Naive thymus-derived CD4-positive, alpha-beta T cell (primary cell): ENCODE measurements at regions of chr4 and their contacts with region 1.

Region 1: DNA sequence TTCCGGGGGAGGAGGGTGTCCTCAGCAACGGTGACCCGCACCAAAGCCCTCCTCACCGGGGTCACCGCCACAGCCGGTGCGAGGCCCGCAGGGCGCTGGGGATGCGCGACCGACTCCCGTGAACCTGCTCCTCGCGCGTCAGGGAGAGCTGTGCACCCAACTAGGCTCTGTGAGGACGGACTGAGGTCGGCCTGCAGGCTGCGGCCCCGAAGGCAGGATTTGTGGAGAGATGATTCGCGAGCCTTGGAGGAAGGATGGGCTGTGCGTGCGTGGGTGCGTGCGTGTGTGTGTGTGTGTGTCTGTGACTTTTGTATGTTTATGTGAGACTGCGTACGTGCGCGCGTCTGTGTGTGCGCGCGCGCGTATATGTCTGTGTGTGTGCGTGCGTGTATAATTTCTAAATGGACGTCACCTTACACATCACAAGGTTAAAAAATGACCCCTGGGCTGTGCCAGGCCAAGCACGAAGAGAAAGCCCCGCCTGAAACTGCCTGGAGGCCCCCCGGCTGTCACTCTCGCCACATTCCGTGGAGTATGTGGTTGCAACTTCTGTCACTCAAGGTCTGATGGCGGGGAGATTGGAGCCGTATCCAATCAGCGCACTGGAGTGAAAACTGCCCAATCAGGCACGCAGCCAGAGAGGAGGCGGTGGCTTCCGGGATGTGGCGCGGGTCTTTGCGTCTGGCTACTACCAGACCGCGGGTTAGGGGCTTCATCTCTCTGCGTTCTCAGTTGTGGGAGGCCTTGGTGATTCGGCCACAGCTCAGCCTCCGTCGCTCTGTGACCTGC is at the start of gene ZNF141:
- DNase-seq: peak; percentile 74 to 95 (median 93)
- ATAC-seq: peak; percentile 93
- H3K4me3 ChIP-seq: peak within 1 kb of the TSS; percentile 91
- H3K4me3 Mint-ChIP-seq: peak within 1 kb of the TSS; percentile 93 to 100 (median 99)
- H3K27ac ChIP-seq: peak within 1 kb of the TSS; percentile 85
- H3K27ac Mint-ChIP-seq: peak within 1 kb of the TSS; percentile 95 to 100 (median 99)
- H3K4me1 ChIP-seq: peaks cover 9 to 10% of the 10 kb centered on the region in 2 donors
- H3K4me1 Mint-ChIP-seq: peaks cover 11 to 46% (median 41%) of the 10 kb centered on the region in 7 donors
- H3K27me3 ChIP-seq: no peaks in the 10 kb centered on the region
- H3K27me3 Mint-ChIP-seq: peaks cover 0 to 6% (median 0%) of the 10 kb centered on the region in 5 donors
- total RNA-seq, gene ZNF141: 19.7 to 76.1 (median 29.0) TPM

Region 2: DNA sequence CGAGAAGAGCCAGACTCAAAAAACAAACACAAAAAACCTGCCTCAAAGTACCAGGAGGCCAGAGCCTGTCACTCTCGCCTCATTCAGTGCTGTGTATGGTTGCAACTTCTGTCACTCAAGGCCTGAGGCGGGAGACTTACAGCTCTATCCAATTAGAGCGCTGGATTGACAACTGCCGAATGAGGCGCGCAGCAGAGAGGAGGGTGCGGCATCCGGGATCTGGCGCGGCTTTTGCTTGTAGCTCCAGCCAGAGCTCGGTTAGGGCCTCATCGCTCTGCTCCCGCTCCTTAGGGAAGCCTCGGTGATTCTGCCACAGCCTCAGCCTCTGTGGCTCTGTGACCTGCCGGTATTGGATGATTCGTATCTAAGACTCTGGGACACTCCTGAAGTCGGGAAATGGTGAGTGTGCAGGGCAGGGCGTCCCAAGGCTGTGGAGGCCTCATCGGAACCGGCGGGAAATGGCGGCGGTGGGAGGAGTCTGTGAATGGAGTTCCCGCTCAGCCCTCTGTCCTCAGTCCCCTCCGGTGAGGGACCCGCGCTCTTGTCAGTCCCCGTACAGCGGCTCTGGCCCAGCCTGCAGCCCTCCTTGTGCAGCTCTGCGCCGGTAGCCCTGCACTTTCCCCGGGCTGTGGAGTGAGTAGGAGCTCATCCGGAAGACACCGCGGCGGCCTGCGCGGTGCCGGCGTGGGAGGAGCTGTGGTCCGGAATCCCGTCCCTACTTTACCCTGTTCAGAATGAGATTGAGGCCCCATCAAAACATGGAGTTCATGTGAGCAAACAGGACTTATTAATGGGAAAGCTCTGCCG is 212.9 kb before region 1 on chr4 and contains the start of gene ZNF718:
- CTCF ChIA-PET with region 1: no interaction called
- POLR2A ChIA-PET with region 1: interaction called, 13 read pairs
- intact Hi-C with region 1: loop called (anchors 5 kb)
- DNase-seq: peak; percentile 17 to 94 (median 90)
- ATAC-seq: peak; percentile 93
- H3K4me3 ChIP-seq: peak within 1 kb of the TSS; percentile 89
- H3K4me3 Mint-ChIP-seq: peak within 1 kb of the TSS; percentile 91 to 100 (median 98)
- H3K27ac ChIP-seq: peak within 1 kb of the TSS; percentile 94
- H3K27ac Mint-ChIP-seq: peak within 1 kb of the TSS; percentile 93 to 100 (median 99)
- H3K4me1 ChIP-seq: peaks cover 22 to 30% of the 10 kb centered on the region in 2 donors
- H3K4me1 Mint-ChIP-seq: peaks cover 21 to 52% (median 42%) of the 10 kb centered on the region in 7 donors
- H3K27me3 ChIP-seq: no peaks in the 10 kb centered on the region
- H3K27me3 Mint-ChIP-seq: no peaks in the 10 kb centered on the region
- total RNA-seq, gene ZNF718: 2.4 to 12.3 (median 10.0) TPM

Region 3: DNA sequence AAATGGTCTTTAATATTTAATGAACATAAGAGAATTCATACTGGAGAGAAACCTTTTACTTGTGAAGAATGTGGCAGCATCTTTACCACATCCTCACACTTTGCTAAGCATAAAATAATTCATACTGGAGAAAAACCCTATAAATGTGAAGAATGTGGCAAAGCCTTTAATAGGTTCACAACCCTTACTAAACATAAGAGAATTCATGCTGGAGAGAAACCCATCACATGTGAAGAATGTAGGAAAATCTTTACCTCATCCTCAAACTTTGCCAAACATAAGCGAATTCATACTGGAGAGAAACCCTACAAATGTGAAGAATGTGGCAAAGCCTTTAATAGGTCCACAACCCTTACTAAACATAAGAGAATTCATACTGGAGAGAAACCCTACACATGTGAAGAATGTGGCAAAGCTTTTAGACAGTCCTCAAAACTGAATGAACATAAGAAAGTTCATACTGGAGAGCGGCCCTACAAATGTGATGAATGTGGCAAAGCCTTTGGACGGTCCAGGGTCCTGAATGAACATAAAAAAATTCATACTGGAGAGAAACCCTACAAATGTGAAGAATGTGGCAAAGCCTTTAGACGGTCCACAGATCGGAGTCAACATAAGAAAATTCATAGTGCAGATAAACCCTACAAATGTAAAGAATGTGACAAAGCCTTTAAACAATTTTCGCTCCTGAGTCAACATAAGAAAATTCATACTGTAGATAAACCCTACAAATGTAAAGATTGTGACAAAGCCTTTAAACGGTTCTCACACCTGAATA is 35.9 kb after region 1 on chr4:
- CTCF ChIA-PET with region 1: no interaction called
- POLR2A ChIA-PET with region 1: interaction called, 5 read pairs
- intact Hi-C with region 1: loop called in 1 of 2 experiments (anchors 5 kb)
- DNase-seq: no peak
- ATAC-seq: no peak
- H3K4me3 ChIP-seq: peak overlapping the region; percentile 8
- H3K4me3 Mint-ChIP-seq: no peak overlapping the region
- H3K27ac ChIP-seq: no peak overlapping the region
- H3K27ac Mint-ChIP-seq: peak overlapping the region in 2 of 9 donors; percentile 28 to 32
- H3K4me1 ChIP-seq: no peaks in the 10 kb centered on the region
- H3K4me1 Mint-ChIP-seq: no peaks in the 10 kb centered on the region
- H3K27me3 ChIP-seq: no peaks in the 10 kb centered on the region
- H3K27me3 Mint-ChIP-seq: no peaks in the 10 kb centered on the region

Region 4: GRCh38 chr4:473570-474457 is 136.5 kb after region 1 on chr4:
- CTCF ChIA-PET with region 1: interaction called, 4 read pairs
- POLR2A ChIA-PET with region 1: interaction called, 24 read pairs
- intact Hi-C with region 1: loop called (anchors 1 kb)
- DNase-seq: peak; percentile 78 to 98 (median 96)
- ATAC-seq: peak; percentile 99
- H3K4me3 ChIP-seq: peak overlapping the region; percentile 93
- H3K4me3 Mint-ChIP-seq: peak overlapping the region; percentile 93 to 99 (median 98)
- H3K27ac ChIP-seq: peak overlapping the region; percentile 92
- H3K27ac Mint-ChIP-seq: peak overlapping the region; percentile 98 to 100 (median 100)
- H3K4me1 ChIP-seq: peaks cover 5 to 7% of the 10 kb centered on the region in 2 donors
- H3K4me1 Mint-ChIP-seq: peaks cover 17 to 47% (median 37%) of the 10 kb centered on the region in 7 donors
- H3K27me3 ChIP-seq: no peaks in the 10 kb centered on the region
- H3K27me3 Mint-ChIP-seq: no peaks in the 10 kb centered on the region

Region 5: GRCh38 chr4:498328-498904 is 161.1 kb after region 1 on chr4:
- CTCF ChIA-PET with region 1: interaction called, 3 read pairs
- POLR2A ChIA-PET with region 1: interaction called, 9 read pairs
- intact Hi-C with region 1: loop called (anchors 1 kb)
- DNase-seq: no peak
- ATAC-seq: peak; percentile 60
- H3K4me3 ChIP-seq: peak overlapping the region; percentile 96
- H3K4me3 Mint-ChIP-seq: peak overlapping the region; percentile 90 to 97 (median 94)
- H3K27ac ChIP-seq: peak overlapping the region; percentile 94
- H3K27ac Mint-ChIP-seq: peak overlapping the region; percentile 91 to 98 (median 97)
- H3K4me1 ChIP-seq: peaks cover 13 to 16% of the 10 kb centered on the region in 2 donors
- H3K4me1 Mint-ChIP-seq: peaks cover 19 to 53% (median 44%) of the 10 kb centered on the region in 7 donors
- H3K27me3 ChIP-seq: no peaks in the 10 kb centered on the region
- H3K27me3 Mint-ChIP-seq: no peaks in the 10 kb centered on the region